ENCODE measurements at regions of chr12 and their contacts with region 1.

Region 1: DNA sequence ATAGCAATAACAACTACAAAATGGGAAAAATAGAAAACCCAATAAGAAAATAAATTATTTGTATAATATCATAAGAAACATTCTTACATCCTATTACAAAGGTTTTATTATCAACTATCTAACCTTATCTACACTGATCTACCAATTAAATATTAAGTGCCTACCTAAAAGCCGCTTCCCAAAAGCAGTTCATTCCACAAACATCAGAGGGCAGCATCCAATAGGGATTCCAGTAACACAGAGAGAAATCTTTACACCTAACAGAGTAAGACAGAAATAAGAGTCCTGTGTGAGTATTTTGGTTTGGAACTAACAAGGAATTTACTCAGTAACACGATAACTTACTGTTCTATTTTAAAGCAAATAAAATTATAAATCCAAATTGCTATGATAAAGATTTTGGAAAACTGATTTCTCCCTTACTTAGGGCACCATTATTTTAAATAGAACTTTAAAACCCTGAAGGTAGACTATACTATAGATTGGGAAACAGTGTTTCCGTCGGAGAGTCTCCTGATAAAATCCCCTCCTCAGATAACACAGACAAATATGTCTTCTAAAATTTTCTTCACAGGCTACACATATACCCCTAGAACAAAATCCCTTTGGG is 15.0 kb downstream of the GXYLT1 start:
- DNase-seq: peak in 1 of 4 donors; percentile 62
- ATAC-seq: peak; percentile 92
- H3K4me3 ChIP-seq: no peak overlapping the region
- H3K27ac ChIP-seq: no peak overlapping the region
- H3K4me1 ChIP-seq: peaks cover 4 to 21% of the 10 kb centered on the region in 2 donors
- H3K27me3 ChIP-seq: no peaks in the 10 kb centered on the region
- CTCF ChIP-seq: peak; percentile 65 to 66

Region 2: DNA sequence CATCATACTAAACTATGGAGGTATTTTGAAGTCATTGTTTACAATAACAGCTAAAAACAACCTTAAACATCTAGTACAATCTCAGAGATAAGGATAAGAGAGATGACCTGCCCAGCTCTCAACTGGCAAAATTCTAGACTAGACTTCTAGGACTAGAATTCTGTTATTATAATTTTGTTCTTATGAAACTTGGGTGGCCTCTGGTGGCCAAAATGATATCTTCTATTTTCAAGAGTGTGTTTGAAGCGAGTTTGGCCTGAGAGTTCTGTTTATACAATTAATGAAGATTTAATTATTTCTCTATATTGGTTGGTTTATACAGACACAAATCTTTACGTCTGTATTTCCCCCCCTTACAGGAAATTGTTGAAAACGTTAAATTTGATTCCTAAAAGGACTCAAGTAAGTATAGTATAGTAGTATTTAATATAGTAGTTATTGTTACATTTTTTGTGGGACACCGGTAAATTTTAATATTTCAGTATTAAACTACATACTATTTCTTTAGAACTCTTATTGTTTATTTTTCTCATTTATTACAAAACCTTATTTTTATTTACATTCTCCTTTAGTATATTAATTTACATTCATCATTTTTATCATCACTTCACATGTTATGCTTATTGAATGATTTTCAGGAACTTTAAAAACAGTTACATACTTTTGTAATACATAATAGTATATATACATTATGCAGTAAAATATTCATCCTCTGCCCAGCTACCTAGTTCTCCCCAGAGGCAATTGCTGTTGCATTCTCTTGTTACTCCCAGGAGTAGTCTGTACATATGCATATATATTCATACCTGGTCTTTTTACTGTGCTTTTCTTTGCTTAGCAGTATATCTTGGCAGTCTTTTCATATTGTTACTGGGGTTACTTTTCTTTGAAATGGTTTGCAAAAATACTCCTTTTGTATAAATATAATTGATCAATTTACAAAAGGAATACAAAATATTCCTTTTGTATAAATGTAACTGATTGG is 202.9 kb after region 1 on chr12:
- intact Hi-C with region 1: loop called in 1 of 2 experiments (anchors 10 kb)
- DNase-seq: peak in 2 of 4 donors; percentile 27 to 56
- ATAC-seq: peak; percentile 77
- H3K4me3 ChIP-seq: no peak overlapping the region
- H3K27ac ChIP-seq: no peak overlapping the region
- H3K4me1 ChIP-seq: peaks cover 0 to 35% of the 10 kb centered on the region in 2 donors
- H3K27me3 ChIP-seq: no peaks in the 10 kb centered on the region
- CTCF ChIP-seq: peak; percentile 46 to 61

Region 3: GRCh38 chr12:42725841-42726240 is 596.1 kb after region 1 on chr12:
- intact Hi-C with region 1: no loop called
- DNase-seq: no peak
- ATAC-seq: no peak
- H3K4me3 ChIP-seq: no peak overlapping the region
- H3K27ac ChIP-seq: no peak overlapping the region
- H3K4me1 ChIP-seq: no peaks in the 10 kb centered on the region
- H3K27me3 ChIP-seq: no peaks in the 10 kb centered on the region
- CTCF ChIP-seq: no peak